Naive thymus-derived CD4-positive, alpha-beta T cell (primary cell): ENCODE measurements at regions of chr14 and their contacts with region 1.

Region 1: GRCh38 chr14:68487805-68488590 is 304.9 kb downstream of the ZFP36L1 start:
- DNase-seq: no peak
- ATAC-seq: no peak
- H3K4me3 ChIP-seq: no peak overlapping the region
- H3K4me3 Mint-ChIP-seq: no peak overlapping the region
- H3K27ac ChIP-seq: no peak overlapping the region
- H3K27ac Mint-ChIP-seq: peak overlapping the region in 2 of 9 donors; percentile 61 to 64
- H3K4me1 ChIP-seq: peaks cover 12 to 27% of the 10 kb centered on the region in 2 donors
- H3K4me1 Mint-ChIP-seq: peaks cover 24 to 64% (median 52%) of the 10 kb centered on the region in 7 donors
- H3K27me3 ChIP-seq: no peaks in the 10 kb centered on the region
- H3K27me3 Mint-ChIP-seq: no peaks in the 10 kb centered on the region

Region 2: DNA sequence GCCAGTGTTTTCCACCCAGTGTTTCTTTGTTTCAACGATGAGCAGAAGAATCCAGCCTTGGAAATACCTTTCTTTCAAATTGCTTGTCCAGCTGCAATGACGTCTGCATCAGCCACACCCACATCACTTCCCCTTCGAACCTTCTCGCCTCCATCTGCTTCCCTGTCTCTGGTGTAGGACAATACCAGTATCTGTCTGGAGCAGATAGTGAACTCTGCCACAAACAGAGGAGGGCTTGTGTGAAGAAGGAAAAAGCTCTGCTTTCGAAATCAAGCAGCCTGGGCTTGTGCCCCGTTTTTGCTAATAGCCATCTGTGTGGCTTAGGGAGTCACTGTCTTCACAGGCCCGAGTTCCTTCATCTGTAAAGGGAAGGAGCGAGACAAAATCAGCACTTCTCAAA is 110.5 kb before region 1 on chr14:
- CTCF ChIA-PET with region 1: no interaction called
- POLR2A ChIA-PET with region 1: no interaction called
- intact Hi-C with region 1: loop called in 1 of 2 experiments (anchors 10 kb)
- DNase-seq: no peak
- ATAC-seq: peak; percentile 62
- H3K4me3 ChIP-seq: no peak overlapping the region
- H3K4me3 Mint-ChIP-seq: peak overlapping the region in 7 of 10 donors; percentile 29 to 72 (median 59)
- H3K27ac ChIP-seq: peak overlapping the region; percentile 37
- H3K27ac Mint-ChIP-seq: peak overlapping the region in 7 of 9 donors; percentile 69 to 89 (median 81)
- H3K4me1 ChIP-seq: peaks cover 0 to 38% of the 10 kb centered on the region in 2 donors
- H3K4me1 Mint-ChIP-seq: peaks cover 30 to 84% (median 72%) of the 10 kb centered on the region in 7 donors
- H3K27me3 ChIP-seq: no peaks in the 10 kb centered on the region
- H3K27me3 Mint-ChIP-seq: no peaks in the 10 kb centered on the region

Region 3: DNA sequence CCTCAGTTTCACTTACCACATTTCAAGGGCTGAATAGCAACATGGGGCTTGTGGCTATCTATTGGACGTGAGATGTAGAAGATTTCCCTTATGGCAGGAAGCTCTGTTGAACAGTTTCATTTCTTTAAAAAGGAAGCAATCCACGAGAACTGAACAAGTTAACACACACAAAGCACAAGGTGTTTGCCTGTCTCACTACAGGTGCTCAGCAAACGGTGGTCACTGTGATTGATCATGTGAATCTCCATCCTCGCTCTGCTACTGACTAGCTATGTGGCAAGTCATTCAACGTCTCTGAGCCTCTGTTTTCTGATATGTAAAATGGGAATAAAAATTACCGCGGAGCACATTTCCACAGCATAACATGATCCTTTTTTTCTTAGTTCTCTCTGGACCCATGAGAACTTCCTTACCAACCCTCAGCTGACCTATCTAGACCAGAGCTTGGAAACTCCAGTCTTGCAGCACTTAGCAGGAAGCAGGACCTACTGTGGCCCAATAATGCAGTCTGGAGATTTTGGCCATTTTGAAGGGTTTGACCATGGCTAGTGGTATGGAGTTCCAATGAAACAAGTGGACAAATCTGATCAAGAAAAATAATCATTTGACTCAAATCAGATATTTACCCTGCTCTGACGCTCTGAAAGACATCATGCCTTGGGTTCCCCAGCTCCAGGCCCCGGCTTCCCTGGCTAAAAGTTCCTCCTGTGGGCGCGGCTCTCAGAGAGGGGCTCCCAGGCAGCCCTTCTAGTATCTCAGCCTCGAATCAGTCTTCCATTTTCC is 26.0 kb after region 1 on chr14:
- CTCF ChIA-PET with region 1: no interaction called
- POLR2A ChIA-PET with region 1: interaction called, 41 read pairs
- intact Hi-C with region 1: no loop called
- DNase-seq: no peak
- ATAC-seq: peak; percentile 48
- H3K4me3 ChIP-seq: no peak overlapping the region
- H3K4me3 Mint-ChIP-seq: peak overlapping the region in 1 of 10 donors; percentile 64
- H3K27ac ChIP-seq: no peak overlapping the region
- H3K27ac Mint-ChIP-seq: peak overlapping the region in 6 of 9 donors; percentile 3 to 69 (median 49)
- H3K4me1 ChIP-seq: peaks cover 0 to 29% of the 10 kb centered on the region in 2 donors
- H3K4me1 Mint-ChIP-seq: peaks cover 10 to 79% (median 61%) of the 10 kb centered on the region in 7 donors
- H3K27me3 ChIP-seq: no peaks in the 10 kb centered on the region
- H3K27me3 Mint-ChIP-seq: no peaks in the 10 kb centered on the region